PC-3 (cell line): ENCODE measurements at regions of chr1 and their contacts with region 1.

Region 1: DNA sequence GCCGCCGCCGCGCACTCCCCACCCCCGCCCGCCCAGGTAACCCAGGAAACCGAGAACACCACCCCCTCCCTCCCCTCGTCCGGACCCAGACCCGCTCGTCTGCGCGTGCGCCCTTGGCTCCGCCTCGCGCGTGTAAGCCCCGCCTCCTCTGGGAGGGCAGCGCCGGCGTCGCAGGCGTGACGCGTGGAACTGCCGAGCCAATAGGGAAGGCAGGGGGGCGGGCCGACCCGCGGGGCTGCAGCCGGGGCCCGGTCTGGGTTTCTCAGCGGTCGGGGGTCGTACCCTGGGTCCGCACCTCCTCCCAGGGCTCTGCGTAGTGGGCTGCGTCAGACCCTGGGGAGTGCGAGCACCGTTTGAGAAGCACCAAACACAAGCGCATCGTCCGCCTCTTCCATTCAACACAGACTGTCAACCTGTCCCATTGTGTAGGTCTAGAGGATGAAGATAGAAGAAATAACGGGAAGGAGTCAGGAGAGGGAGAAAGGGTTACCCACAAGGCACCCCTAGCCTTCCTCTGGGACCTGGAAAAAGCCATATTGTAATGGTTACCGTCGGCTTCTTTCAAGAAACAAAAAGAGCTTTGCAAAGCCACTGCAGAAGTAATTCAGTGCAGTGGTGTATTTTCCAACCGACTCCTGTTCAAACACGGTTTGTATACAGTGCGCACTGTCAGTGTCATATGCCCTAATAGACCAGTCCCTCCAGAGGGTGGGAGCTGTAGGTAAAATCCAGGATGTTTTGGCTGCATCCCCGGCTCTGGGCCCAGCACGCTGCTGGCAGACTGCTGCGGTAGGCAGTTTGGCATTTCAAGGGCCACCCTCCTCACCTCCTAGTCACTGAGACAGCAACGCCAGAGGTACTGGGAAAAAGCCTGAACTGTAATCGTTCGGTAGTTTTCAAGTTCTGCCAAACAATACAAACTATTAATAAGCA is 473 bp upstream of the LYST start:
- DNase-seq: peak; percentile 93
- ATAC-seq: peak; percentile 75
- H3K4me3 ChIP-seq: peak overlapping the region; percentile 88
- H3K27ac ChIP-seq: peak overlapping the region; percentile 4; the same call in 1 of the 2 replicates
- H3K4me1 ChIP-seq: peaks cover 21% of the 10 kb centered on the region
- H3K27me3 ChIP-seq: no peaks in the 10 kb centered on the region
- CTCF ChIP-seq: no peak

Region 2: GRCh38 chr1:235892734-235893413 is 25.7 kb after region 1 on chr1:
- CTCF ChIA-PET with region 1: no interaction called
- POLR2A ChIA-PET with region 1: no interaction called
- intact Hi-C with region 1: no loop called
- DNase-seq: no peak
- ATAC-seq: no peak
- H3K4me3 ChIP-seq: no peak overlapping the region
- H3K27ac ChIP-seq: no peak overlapping the region
- H3K4me1 ChIP-seq: no peaks in the 10 kb centered on the region
- H3K27me3 ChIP-seq: no peaks in the 10 kb centered on the region
- CTCF ChIP-seq: no peak

Region 3: GRCh38 chr1:235910357-235911299 is 43.4 kb after region 1 on chr1:
- CTCF ChIA-PET with region 1: interaction called, 7 read pairs
- POLR2A ChIA-PET with region 1: no interaction called
- intact Hi-C with region 1: loop called (anchors 2 kb)
- DNase-seq: peak; percentile 92
- ATAC-seq: peak; percentile 74
- H3K4me3 ChIP-seq: peak overlapping the region; percentile 45
- H3K27ac ChIP-seq: peak overlapping the region; percentile 100
- H3K4me1 ChIP-seq: peaks cover 51% of the 10 kb centered on the region
- H3K27me3 ChIP-seq: no peaks in the 10 kb centered on the region
- CTCF ChIP-seq: no peak

Region 4: GRCh38 chr1:235946571-235946981 is 79.4 kb after region 1 on chr1:
- CTCF ChIA-PET with region 1: no interaction called
- POLR2A ChIA-PET with region 1: no interaction called
- intact Hi-C with region 1: loop called (anchors 1 kb)
- DNase-seq: peak; percentile 46
- ATAC-seq: peak; percentile 35
- H3K4me3 ChIP-seq: no peak overlapping the region
- H3K27ac ChIP-seq: no peak overlapping the region
- H3K4me1 ChIP-seq: peaks cover 24% of the 10 kb centered on the region
- H3K27me3 ChIP-seq: no peaks in the 10 kb centered on the region
- CTCF ChIP-seq: peak; percentile 67